Activated CD4-positive, alpha-beta T cell treated with anti-CD3 and anti-CD28 coated beads for 36 hours (primary cell): ENCODE measurements at regions of chr12 and their contacts with region 1.

Region 1: GRCh38 chr12:46372544-46373110 is at the start of gene SLC38A2:
- DNase-seq: peak; percentile 98
- ATAC-seq: peak; percentile 84
- H3K4me3 Mint-ChIP-seq: peak within 1 kb of the TSS; percentile 97
- H3K27ac Mint-ChIP-seq: peak within 1 kb of the TSS; percentile 99
- H3K4me1 Mint-ChIP-seq: peaks cover 55% of the 10 kb centered on the region
- H3K27me3 Mint-ChIP-seq: no peaks in the 10 kb centered on the region
- total RNA-seq, gene SLC38A2: 211 to 296 TPM

Region 2: DNA sequence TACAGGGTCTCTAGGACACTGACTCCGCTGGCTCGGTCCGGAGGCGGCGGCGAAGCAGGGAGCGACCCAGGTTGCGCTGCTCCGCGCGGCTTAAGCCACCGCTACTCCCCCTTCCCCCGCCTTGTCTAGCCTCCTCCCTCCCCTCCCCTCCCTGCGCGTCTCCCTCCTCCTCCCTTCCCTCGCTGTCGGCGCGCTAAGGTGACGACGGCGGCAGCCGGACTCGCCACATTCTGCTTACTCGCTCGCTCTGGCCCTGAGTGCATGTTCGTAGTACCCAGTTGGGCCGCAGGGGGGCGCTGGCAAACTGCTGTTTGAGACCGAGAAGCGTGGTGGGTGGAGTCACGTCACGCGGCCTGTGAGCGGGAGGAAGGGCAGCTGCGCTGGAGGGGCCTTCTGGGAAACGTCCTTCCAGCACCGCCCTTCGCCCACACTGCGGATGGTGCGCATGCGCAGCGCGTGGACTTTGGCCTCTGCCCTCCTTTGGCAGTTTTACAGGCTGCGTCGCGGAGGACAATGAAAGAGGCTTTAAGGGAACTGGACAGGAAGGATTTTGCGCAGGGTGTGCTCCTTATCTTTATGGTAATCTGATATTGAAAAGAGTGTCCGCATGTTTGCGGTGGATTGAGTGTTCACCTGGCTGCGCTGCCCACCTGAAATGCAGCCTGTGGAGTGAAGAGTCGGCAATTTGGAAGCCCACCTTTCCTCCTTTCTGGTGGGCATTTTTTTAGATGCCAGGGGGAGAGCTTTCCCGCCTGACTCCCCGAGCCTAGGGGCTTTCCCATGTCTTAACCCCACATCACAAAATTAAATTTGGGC is 382.0 kb before region 1 on chr12 and contains the start of gene SCAF11:
- CTCF ChIA-PET with region 1: no interaction called
- POLR2A ChIA-PET with region 1: interaction called, 3 read pairs
- intact Hi-C with region 1: loop called (anchors 1 to 5 kb)
- DNase-seq: peak; percentile 100
- ATAC-seq: peak; percentile 79
- H3K4me3 Mint-ChIP-seq: peak within 1 kb of the TSS; percentile 93
- H3K27ac Mint-ChIP-seq: peak within 1 kb of the TSS; percentile 100
- H3K4me1 Mint-ChIP-seq: peaks cover 34% of the 10 kb centered on the region
- H3K27me3 Mint-ChIP-seq: no peaks in the 10 kb centered on the region
- total RNA-seq, gene SCAF11: 132 to 145 TPM

Region 3: GRCh38 chr12:46005151-46005797 is 367.4 kb before region 1 on chr12:
- CTCF ChIA-PET with region 1: no interaction called
- POLR2A ChIA-PET with region 1: no interaction called
- intact Hi-C with region 1: no loop called
- DNase-seq: no peak
- ATAC-seq: no peak
- H3K4me3 Mint-ChIP-seq: no peak overlapping the region
- H3K27ac Mint-ChIP-seq: no peak overlapping the region
- H3K4me1 Mint-ChIP-seq: no peaks in the 10 kb centered on the region
- H3K27me3 Mint-ChIP-seq: no peaks in the 10 kb centered on the region

Region 4: GRCh38 chr12:46382964-46383653 is 10.5 kb after region 1 on chr12:
- CTCF ChIA-PET with region 1: no interaction called
- POLR2A ChIA-PET with region 1: interaction called, 5 read pairs
- intact Hi-C with region 1: loop called (anchors 1 kb)
- DNase-seq: peak; percentile 97
- ATAC-seq: peak; percentile 83
- H3K4me3 Mint-ChIP-seq: peak overlapping the region; percentile 74
- H3K27ac Mint-ChIP-seq: peak overlapping the region; percentile 89
- H3K4me1 Mint-ChIP-seq: peaks cover 39% of the 10 kb centered on the region
- H3K27me3 Mint-ChIP-seq: no peaks in the 10 kb centered on the region

Region 5: DNA sequence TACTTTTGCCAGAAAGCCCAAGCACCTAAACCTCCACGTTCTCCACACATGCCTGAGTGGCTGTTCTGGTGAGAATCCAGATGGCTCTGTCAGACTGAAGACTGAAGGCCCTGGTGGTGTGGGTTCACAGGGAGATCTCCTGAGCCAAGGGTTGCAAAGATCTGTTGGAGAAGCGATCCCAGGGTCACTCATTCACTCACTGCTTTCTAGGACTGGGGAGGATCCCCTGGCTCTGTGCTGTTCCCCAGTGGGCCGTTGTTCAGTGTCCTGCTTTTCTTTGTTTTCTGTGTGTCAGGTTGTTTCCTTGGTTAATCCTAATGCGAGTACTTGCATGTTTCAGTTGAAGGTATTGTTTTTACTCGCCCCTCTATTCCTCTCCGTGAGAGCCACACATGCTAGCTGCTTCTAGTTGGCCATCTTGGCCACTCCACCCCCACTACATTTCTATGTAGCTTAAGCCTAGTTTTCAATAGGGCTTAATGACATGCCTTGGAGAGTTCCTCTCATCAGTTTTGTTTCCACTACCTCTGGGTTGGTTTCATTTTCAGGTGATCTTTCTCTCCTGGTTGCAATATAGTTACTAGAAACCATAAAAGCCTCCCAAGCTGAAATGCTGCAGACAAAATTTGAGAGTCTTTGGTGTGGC is 144.4 kb after region 1 on chr12:
- CTCF ChIA-PET with region 1: no interaction called
- POLR2A ChIA-PET with region 1: interaction called, 4 read pairs
- intact Hi-C with region 1: loop called in 1 of 2 experiments (anchors 2 kb)
- DNase-seq: peak; percentile 49
- ATAC-seq: peak; percentile 93
- H3K4me3 Mint-ChIP-seq: peak overlapping the region; percentile 3
- H3K27ac Mint-ChIP-seq: peak overlapping the region; percentile 90
- H3K4me1 Mint-ChIP-seq: peaks cover 61% of the 10 kb centered on the region
- H3K27me3 Mint-ChIP-seq: no peaks in the 10 kb centered on the region

Region 6: DNA sequence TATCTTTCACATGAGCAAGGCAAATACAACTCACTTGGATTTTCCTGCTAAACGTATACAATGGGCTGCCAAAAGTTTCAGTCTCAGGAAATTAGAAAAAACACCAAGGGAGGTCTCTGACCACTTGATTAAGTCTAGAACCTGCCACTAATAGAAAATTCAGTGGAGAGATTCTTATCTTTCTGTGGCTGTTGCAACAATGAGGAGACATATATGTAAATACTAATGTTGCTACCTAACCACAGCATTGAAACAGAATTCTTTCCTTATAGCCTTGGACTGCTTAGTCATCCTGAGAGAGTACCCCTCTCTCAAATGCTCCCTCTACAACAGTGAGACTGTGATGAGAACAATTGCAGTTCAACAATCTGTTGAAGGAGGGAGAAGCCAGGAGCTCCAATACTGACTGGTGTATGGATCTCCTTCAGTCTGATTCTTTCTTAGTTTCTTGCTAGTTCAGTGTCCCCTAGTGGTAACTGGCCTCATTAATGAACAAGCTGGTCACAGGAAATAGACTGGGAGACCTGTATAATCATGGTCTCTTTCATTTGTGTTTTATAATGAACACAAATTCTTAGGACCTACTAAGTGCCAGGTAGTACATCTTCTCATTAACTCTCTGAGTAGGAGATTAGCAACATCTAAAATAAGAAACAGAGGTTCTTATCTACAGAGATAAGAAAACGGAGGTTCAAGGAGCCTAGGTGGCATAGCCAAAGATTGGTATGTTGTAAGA is 288.7 kb after region 1 on chr12:
- CTCF ChIA-PET with region 1: interaction called, 3 read pairs
- POLR2A ChIA-PET with region 1: no interaction called
- intact Hi-C with region 1: loop called (anchors 2 kb)
- DNase-seq: peak; percentile 11
- ATAC-seq: peak; percentile 79
- H3K4me3 Mint-ChIP-seq: no peak overlapping the region
- H3K27ac Mint-ChIP-seq: no peak overlapping the region
- H3K4me1 Mint-ChIP-seq: peaks cover 36% of the 10 kb centered on the region
- H3K27me3 Mint-ChIP-seq: no peaks in the 10 kb centered on the region

Region 7: DNA sequence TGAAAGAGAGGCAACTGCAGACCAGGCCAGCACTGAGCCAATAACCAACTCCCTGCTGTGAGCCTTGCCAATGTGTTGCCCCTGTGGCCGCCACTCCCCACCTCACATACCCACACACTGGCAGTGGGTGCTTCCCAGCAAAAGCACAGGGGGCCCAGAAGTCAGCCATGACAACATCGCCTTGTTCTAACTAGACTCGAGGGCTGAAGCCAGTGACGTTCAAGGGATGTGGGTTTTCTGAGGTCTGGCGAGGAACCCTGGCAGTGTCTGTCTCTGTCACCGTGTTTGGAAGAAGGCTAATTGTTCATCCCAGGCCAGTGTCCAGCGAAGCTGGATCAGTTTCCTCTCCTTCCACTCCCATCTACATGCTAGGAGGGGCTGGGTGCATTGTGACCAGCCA is 1018.9 kb after region 1 on chr12:
- CTCF ChIA-PET with region 1: no interaction called
- POLR2A ChIA-PET with region 1: no interaction called
- intact Hi-C with region 1: loop called in 1 of 2 experiments (anchors 2 kb)
- DNase-seq: peak; percentile 84
- ATAC-seq: peak; percentile 48
- H3K4me3 Mint-ChIP-seq: peak overlapping the region; percentile 61
- H3K27ac Mint-ChIP-seq: peak overlapping the region; percentile 100
- H3K4me1 Mint-ChIP-seq: peaks cover 89% of the 10 kb centered on the region
- H3K27me3 Mint-ChIP-seq: no peaks in the 10 kb centered on the region